Right ventricle myocardium superior (tissue), 1 donor: ENCODE measurements at regions of chr5 and their contacts with region 1.

Region 1: GRCh38 chr5:54415896-54416601 is 39.5 kb upstream of the HSPB3 start:
- DNase-seq: no peak
- ATAC-seq: no peak

Region 2: DNA sequence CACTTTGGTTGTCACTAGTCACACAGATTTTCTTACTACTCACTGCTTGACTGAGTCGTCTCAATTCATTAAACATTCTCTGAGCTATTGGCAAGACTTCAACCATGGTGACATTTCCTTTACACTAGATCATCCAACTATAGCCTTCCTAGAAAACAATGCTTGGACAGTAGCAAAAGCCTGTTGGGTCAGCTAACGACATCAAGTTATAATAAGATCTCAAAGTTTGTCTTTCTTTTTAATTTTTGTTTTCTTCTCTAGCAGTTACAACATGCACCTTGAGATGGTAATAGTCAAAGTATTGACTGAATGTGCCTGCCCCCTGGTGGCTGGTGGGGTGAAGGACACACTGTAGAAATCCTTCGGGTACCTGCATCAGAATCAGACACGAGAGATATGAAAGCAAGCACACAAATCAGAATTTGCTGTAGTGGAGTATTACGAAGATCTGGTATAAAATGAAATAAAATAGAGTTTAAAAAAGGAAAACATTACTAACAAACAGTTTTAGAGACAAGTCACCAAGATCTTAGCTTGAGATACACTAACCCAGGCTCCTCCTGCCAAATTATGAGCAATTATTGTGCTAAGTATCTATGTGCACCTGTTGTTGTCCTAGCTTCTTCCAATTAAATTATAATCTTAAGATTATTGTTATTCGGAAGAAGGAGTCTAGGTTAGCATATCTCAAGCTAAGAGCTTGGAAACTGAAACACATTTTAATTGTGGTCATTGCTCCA is 186.8 kb before region 1 on chr5:
- intact Hi-C with region 1: no loop called
- DNase-seq: peak; percentile 77
- ATAC-seq: peak; percentile 80

Region 3: DNA sequence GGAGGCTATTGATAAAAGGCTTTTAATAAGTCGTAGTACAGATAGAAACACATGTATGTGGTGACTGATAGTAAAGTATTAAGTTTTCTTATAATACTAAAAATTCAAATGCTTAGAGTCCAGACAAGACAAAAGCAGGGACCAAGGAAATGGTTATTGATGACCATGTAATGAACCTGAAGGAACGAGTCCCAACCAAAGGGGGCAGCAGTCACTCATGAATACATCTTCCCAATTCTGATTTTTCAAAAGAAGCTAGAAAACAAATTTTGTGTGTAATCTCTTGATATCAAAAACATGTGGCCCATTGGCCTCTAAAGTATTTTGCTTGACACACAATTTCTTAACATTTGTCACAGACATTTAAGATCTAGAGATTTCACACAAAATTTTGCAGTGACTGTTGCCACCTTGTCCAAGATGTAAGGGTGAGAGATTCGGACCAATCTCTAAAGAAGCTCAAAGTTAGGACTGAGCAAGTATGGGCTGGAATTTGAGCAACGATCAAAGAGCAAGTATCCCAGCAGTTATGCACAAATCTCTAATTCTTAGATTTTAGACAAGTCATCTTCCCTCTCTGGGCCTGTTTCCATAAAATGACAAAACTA is 172.5 kb before region 1 on chr5:
- intact Hi-C with region 1: no loop called
- DNase-seq: no peak
- ATAC-seq: peak; percentile 57

Region 4: GRCh38 chr5:54310433-54311175 is 105.4 kb before region 1 on chr5 and contains the start of gene ARL15:
- intact Hi-C with region 1: loop called (anchors 10 kb)
- DNase-seq: peak; percentile 99
- ATAC-seq: peak; percentile 97
- total RNA-seq, gene ARL15: 20.3 TPM